Common myeloid progenitor, CD34-positive (primary cell): ENCODE measurements at regions of chr9 and their contacts with region 1.

Region 1: GRCh38 chr9:121107041-121107440 is 32.3 kb downstream of the CNTRL start:
- DNase-seq: peak; percentile 57 to 80 (median 68)
- H3K4me3 ChIP-seq: peak overlapping the region in 1 of 7 experiments; percentile 10
- H3K27ac ChIP-seq: peak overlapping the region in 1 of 2 experiments; percentile 36
- H3K4me1 ChIP-seq: peaks cover 32 to 56% (median 44%) of the 10 kb centered on the region in 4 experiments
- H3K27me3 ChIP-seq: no peaks in the 10 kb centered on the region

Region 2: GRCh38 chr9:121121582-121122087 is 14.6 kb after region 1 on chr9:
- CTCF ChIA-PET with region 1: interaction called, 11 read pairs
- POLR2A ChIA-PET with region 1: interaction called, 4 read pairs
- DNase-seq: peak; percentile 96 to 98 (median 98)
- H3K4me3 ChIP-seq: peak overlapping the region in 6 of 7 experiments; percentile 67 to 87 (median 74)
- H3K27ac ChIP-seq: peak overlapping the region; percentile 72 to 85
- H3K4me1 ChIP-seq: peaks cover 16 to 38% (median 21%) of the 10 kb centered on the region in 4 experiments
- H3K27me3 ChIP-seq: no peaks in the 10 kb centered on the region